PC-9 (cell line): ENCODE measurements at regions of chr7 and their contacts with region 1.

Region 1: GRCh38 chr7:126411032-126411820 is 841.5 kb downstream of the GRM8 start:
- DNase-seq: no peak
- H3K4me3 ChIP-seq: peak overlapping the region; percentile 53; the same call in 1 of the 2 replicates
- H3K27ac ChIP-seq: no peak overlapping the region
- H3K4me1 ChIP-seq: no peaks in the 10 kb centered on the region
- H3K27me3 ChIP-seq: no peaks in the 10 kb centered on the region
- CTCF ChIP-seq: no peak

Region 2: DNA sequence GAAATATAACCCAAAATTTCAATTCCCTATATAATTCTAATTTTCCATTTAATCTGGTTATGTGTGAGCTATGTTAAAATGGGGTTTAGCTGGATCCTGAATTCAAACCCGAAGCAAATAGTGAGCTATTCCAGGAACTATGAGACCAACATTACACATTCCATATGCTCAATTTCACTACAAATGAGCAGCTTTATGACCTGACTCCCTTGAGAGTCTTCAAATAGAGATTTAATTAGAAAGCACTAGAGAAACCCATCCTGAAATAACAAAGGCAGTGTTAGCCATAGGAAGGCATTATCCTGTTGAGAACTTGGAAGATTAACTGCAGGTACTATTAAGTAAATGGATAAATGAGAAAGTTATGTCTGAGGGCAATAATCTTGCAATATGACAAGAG is 48.5 kb before region 1 on chr7:
- CTCF ChIA-PET with region 1: no interaction called
- POLR2A ChIA-PET with region 1: interaction called, 11 read pairs
- intact Hi-C with region 1: no loop called
- DNase-seq: no peak
- H3K4me3 ChIP-seq: no peak overlapping the region
- H3K27ac ChIP-seq: no peak overlapping the region
- H3K4me1 ChIP-seq: no peaks in the 10 kb centered on the region
- H3K27me3 ChIP-seq: no peaks in the 10 kb centered on the region
- CTCF ChIP-seq: no peak